ENCODE measurements at regions of chr3 and their contacts with region 1.

Region 1: DNA sequence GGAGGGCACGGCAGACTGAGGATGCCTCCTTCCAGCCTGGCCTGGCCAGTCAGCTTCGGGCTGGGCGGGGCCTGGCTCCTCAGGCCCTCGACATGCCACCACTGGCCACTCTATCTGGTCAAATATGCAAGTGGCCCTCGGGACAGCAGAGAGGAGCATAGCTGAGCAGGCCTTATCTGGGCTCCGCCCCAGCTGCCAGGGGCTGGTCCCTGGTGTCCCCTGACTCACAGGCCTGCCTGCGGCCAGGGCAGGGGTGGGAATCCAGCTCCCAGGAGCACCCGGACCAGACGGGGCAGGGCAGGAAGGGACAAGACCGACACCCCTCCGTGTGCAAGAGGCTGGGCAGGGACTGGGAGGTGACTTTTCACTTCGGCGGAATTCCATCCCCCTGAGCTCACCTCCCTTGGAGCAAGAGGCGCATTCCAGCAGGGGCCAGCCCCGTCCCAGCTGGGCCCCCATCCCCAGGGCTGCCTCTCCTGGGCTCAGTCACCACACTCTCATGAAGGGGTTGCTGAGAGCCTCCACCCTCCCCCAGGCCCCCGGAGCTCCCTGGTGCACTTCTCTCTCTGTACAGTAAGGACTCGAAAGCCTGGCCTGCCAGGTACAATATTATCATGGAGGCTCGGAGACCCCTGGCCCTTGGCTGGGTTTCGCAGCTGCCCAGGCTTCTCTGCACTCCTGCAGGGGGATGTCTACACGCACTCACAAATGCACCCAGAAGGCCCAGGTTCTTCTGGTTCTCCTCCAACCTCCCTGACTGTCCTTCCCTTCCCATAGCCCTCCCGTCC is 29.5 kb downstream of the WNT7A start:
- DNase-seq: peak; percentile 98
- ATAC-seq: peak; percentile 79
- H3K4me3 ChIP-seq: no peak overlapping the region
- H3K27ac ChIP-seq: peak overlapping the region; percentile 84
- H3K4me1 ChIP-seq: peaks cover 61% of the 10 kb centered on the region
- H3K27me3 ChIP-seq: no peaks in the 10 kb centered on the region
- CTCF ChIP-seq: no peak

Region 2: GRCh38 chr3:13801361-13802214 is 48.8 kb before region 1 on chr3:
- CTCF ChIA-PET with region 1: no interaction called
- POLR2A ChIA-PET with region 1: interaction called, 6 read pairs
- intact Hi-C with region 1: loop called (anchors 1 kb)
- DNase-seq: peak; percentile 99
- ATAC-seq: peak; percentile 95
- H3K4me3 ChIP-seq: no peak overlapping the region
- H3K27ac ChIP-seq: peak overlapping the region; percentile 88
- H3K4me1 ChIP-seq: peaks cover 20% of the 10 kb centered on the region
- H3K27me3 ChIP-seq: no peaks in the 10 kb centered on the region
- CTCF ChIP-seq: no peak

Region 3: DNA sequence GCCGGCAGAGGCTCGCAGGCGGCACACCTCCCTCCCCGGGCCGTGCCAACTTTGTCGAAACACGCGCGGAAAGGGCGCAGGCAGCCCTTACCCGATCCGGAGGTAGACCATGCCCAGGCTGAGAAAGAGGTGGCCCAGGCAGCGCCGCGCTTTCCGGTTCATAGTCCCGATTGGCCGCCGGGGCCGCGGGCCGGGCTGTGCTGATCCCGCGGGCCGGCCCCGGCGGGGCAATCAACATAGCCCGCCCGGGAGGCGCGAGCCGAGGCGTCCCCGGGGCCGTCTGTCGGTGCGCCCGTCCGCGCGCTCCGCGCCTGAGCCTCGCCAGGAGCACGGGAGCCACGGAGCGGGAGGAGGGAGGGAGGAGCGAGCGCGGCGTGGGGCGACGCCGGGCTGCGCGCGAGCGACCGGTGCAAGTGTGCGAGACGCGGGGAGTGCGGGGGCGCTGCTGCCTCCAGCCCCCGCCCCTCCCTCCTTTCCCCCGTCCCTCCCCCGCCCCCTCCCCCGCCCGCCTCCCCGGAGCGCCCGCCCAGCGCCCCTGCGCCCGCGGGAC is 29.4 kb after region 1 on chr3 and contains the start of gene WNT7A:
- CTCF ChIA-PET with region 1: interaction called, 10 read pairs
- POLR2A ChIA-PET with region 1: no interaction called
- intact Hi-C with region 1: loop called (anchors 1 kb)
- DNase-seq: peak; percentile 26
- ATAC-seq: peak; percentile 25
- H3K4me3 ChIP-seq: peak within 1 kb of the TSS; percentile 87
- H3K27ac ChIP-seq: no peak within 1 kb of the TSS
- H3K4me1 ChIP-seq: no peaks in the 10 kb centered on the region
- H3K27me3 ChIP-seq: no peaks in the 10 kb centered on the region
- CTCF ChIP-seq: no peak; the same call in 1 of the 2 replicates
- total RNA-seq, gene WNT7A: 16.2 and 18.1 TPM in 2 replicates

Region 4: DNA sequence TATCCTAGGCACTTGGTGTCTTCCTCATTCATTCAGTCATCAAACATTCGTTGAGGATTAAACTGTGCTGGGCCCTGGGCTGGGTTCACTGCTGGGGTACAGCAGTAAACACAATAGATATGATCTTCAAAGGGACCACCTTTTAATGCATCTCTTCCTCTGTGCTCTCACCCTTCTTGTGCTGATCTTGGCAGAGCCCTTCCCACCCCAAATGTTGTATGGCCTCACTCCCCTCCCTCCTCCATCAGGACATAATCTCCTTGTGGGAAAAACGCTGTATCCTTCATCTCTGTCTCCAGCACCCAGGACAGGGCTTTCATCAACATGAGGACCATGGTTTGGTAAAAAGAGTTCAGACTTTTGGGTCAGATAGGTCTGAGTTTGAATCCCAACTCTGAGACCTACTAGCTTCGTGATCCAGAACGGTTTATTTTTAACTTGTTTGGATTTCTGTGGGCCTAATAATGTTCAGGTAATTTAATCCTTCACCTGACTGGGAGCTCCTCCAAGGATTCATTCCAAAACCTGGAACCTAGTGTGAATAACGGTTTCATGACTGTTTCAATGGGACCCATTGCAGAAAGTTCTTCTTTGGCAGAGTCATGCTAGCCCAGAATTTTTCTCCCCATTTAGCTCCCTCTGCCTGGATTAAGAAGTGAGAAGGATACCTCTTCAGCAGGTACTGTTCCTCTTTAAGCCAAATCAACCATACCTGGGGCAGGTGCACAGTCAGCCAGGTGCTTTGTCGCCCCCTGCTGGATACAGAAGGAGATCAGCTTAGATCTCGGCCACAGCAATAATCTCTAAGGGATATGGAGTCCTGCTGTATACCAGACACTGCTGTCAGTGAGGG is 34.7 kb after region 1 on chr3:
- CTCF ChIA-PET with region 1: interaction called, 10 read pairs
- POLR2A ChIA-PET with region 1: no interaction called
- intact Hi-C with region 1: no loop called
- DNase-seq: peak; percentile 86
- ATAC-seq: peak; percentile 81
- H3K4me3 ChIP-seq: no peak overlapping the region
- H3K27ac ChIP-seq: no peak overlapping the region
- H3K4me1 ChIP-seq: no peaks in the 10 kb centered on the region
- H3K27me3 ChIP-seq: no peaks in the 10 kb centered on the region
- CTCF ChIP-seq: peak; percentile 96

Region 5: DNA sequence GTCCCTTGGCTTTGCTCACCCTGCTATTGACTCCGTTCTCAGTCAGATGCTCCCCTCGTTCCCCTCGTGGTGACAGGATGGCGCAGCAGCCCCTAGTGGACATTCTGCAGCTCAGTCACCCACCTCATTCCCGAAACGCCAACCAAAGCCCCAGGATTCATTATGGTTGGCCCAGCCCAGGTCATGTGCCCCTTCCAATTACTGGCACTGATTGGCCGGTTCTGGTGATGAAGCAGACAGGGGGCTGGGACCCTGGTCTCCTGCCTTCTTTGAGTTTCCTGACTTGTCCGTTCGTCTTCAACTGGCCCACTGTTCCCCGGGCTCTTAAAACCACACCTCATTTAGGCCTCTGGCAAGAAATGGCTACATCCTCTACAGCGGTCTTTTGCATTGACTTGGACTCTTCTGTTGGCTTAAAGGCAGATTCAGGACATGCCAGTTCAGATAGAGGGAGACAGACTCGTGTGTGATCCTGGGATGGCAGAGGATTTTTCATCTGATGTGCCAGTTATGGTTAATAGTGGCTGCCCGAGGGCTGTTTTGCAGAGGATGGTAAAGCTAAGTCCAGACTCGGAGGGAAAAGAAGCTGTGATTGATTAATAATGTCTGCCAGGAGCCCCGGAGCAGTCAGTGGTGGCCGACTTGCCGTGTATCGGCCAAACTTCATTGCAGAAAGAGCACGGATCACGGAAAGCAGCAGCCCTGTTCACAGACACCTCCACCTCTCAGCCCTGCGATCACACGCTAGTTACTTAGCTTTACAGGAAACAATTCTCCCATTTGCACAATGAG is 366.1 kb after region 1 on chr3:
- CTCF ChIA-PET with region 1: no interaction called
- POLR2A ChIA-PET with region 1: no interaction called
- intact Hi-C with region 1: no loop called
- DNase-seq: no peak
- ATAC-seq: no peak; the same call in 1 of the 2 replicates
- H3K4me3 ChIP-seq: no peak overlapping the region
- H3K27ac ChIP-seq: no peak overlapping the region
- H3K4me1 ChIP-seq: no peaks in the 10 kb centered on the region
- H3K27me3 ChIP-seq: no peaks in the 10 kb centered on the region
- CTCF ChIP-seq: peak; percentile 36; the same call in 1 of the 2 replicates

Measured in PC-3 (cell line).